Breast epithelium (tissue), 4 donors: ENCODE measurements at regions of chr5 and their contacts with region 1.

Region 1: DNA sequence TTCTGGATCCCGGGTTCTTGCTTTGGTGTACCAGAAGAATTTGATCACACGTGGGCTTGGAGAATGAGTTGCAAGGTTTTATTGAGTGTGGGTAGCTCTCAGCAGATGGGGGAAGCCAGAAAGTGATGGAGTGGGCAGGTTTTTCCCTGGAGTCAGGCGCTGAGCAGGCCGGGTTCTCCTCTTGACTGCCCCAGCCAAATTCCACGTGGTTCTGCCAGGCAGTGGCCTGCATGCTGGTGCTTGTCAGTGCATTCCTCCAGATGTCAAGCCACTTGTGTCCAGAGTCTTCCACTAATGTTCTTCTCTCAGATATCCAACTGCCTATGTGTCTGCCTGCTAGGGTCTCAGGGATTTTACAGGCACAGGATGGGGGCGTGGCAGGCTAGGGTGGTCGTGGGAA is 1056.1 kb upstream of the CDH18 start:
- DNase-seq: no peak
- H3K4me3 ChIP-seq: no peak overlapping the region
- H3K27ac ChIP-seq: no peak overlapping the region
- H3K4me1 ChIP-seq: no peaks in the 10 kb centered on the region
- H3K27me3 ChIP-seq: no peaks in the 10 kb centered on the region
- CTCF ChIP-seq: no peak
- POLR2A ChIP-seq: no peak

Region 2: GRCh38 chr5:20536813-20537212 is 507.3 kb before region 1 on chr5:
- intact Hi-C with region 1: no loop called
- DNase-seq: no peak
- H3K4me3 ChIP-seq: no peak overlapping the region
- H3K27ac ChIP-seq: no peak overlapping the region
- H3K4me1 ChIP-seq: no peaks in the 10 kb centered on the region
- H3K27me3 ChIP-seq: no peaks in the 10 kb centered on the region
- CTCF ChIP-seq: no peak
- POLR2A ChIP-seq: no peak

Region 3: DNA sequence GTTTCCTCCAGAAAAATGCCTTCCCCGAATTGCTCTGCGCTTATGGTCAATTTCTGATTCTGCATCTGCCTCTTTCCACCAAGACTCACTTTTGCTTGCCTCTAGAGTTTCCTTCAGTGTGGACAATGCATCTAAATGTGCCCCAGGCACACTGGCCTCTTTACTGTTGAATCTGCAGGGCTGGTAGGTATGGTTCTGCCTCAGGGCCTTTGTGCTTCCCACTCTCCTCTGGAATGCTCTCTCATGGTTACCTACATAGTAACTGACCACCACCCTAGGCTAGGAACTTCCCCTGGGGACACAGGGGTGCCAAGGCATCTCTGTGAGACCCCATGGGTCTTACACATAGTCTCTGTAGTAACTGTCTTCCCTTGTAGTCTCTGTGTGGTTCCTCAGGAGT is 550.4 kb after region 1 on chr5:
- intact Hi-C with region 1: loop called (anchors 5 kb)
- DNase-seq: no peak
- H3K4me3 ChIP-seq: no peak overlapping the region
- H3K27ac ChIP-seq: no peak overlapping the region
- H3K4me1 ChIP-seq: no peaks in the 10 kb centered on the region
- H3K27me3 ChIP-seq: no peaks in the 10 kb centered on the region
- CTCF ChIP-seq: no peak
- POLR2A ChIP-seq: no peak